ENCODE measurements at regions of chr14 and their contacts with region 1.

Region 1: DNA sequence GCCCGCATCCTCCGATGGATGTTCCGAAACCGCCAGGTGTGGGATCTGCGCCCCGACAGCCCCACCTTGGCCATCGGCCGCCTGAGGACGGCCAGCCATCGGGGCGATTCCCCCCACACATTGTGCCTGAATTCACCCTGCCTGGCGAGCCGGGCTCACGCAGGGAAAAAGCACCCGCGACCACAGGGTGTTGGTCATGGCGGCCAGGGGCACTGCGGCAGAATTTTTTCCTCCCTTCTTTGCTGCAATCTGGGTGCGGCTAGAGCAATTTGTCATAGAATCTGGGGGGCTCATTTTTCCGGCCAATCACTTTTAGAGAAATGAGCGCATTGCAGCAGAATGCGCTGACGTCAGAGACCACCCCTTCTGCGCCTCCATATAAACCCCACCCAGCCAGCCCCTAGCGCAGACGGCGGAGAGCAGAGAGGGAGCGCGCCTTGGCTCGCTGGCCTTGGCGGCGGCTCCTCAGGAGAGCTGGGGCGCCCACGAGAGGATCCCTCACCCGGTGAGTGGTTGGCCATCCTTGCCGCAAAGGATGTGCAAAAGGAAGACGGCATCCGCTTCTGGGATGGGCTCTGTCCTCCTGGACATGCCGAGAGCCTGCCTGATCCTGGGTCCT is at the start of gene MEG3:
- DNase-seq: no peak
- ATAC-seq: no peak
- H3K4me3 Mint-ChIP-seq: peak within 1 kb of the TSS; percentile 90
- H3K27ac Mint-ChIP-seq: peak within 1 kb of the TSS; percentile 68
- H3K4me1 Mint-ChIP-seq: peaks cover 30% of the 10 kb centered on the region
- H3K27me3 Mint-ChIP-seq: peaks cover 31% of the 10 kb centered on the region
- CTCF ChIP-seq: no peak
- total RNA-seq, gene MEG3: 338 to 534 TPM (median 517 TPM) in 3 replicates

Region 2: GRCh38 chr14:100815478-100816285 is 10.1 kb before region 1 on chr14:
- CTCF ChIA-PET with region 1: interaction called, 17 read pairs
- POLR2A ChIA-PET with region 1: interaction called, 9 read pairs
- DNase-seq: no peak
- ATAC-seq: no peak
- H3K4me3 Mint-ChIP-seq: no peak overlapping the region
- H3K27ac Mint-ChIP-seq: 0 out of 2 replicates have a peak overlapping the region, but pooled peaks have one; percentile 26
- H3K4me1 Mint-ChIP-seq: peaks cover 48% of the 10 kb centered on the region
- H3K27me3 Mint-ChIP-seq: no peaks in the 10 kb centered on the region; the same call in 1 of the 2 replicates
- CTCF ChIP-seq: no peak

Region 3: DNA sequence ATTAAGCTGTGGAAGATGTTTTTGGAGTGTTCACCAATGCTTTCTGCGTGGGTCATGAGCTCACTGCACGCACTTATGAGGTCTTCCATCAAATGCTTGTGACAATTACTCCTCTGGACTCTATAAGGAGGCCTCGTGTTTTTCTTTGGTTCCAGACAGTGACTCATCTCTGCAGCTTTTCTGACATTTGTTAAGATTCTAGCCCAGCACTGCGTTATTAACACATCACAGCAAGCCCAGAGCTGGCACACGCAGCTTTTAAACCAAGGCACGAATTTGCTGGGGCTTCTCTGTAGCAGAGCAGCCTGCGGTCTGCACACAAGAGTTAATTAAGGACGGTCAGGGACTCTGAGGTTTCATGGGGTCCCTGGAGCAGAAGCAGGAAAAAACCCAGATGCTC is 17.0 kb after region 1 on chr14:
- CTCF ChIA-PET with region 1: no interaction called
- POLR2A ChIA-PET with region 1: no interaction called
- DNase-seq: no peak
- ATAC-seq: no peak
- H3K4me3 Mint-ChIP-seq: no peak overlapping the region
- H3K27ac Mint-ChIP-seq: no peak overlapping the region
- H3K4me1 Mint-ChIP-seq: peaks cover 37% of the 10 kb centered on the region
- H3K27me3 Mint-ChIP-seq: 0 out of 2 replicates have a peak, but pooled peaks cover 5% of the 10 kb centered on the region
- CTCF ChIP-seq: no peak

Measured in WTC11 (cell line).